Activated T-helper 2 cell treated with anti-CD3 and anti-CD28 coated beads, Interferon-gamma antibody, Interleukin-2, Interleukin-4, amounts not matched to agents 10 μg/mL and 5 μg/mL and 100 μg/mL, durations not matched to agents 14 hours and 24 hours and 36 hours (primary cell): ENCODE measurements at regions of chr10 and their contacts with region 1.

Region 1: DNA sequence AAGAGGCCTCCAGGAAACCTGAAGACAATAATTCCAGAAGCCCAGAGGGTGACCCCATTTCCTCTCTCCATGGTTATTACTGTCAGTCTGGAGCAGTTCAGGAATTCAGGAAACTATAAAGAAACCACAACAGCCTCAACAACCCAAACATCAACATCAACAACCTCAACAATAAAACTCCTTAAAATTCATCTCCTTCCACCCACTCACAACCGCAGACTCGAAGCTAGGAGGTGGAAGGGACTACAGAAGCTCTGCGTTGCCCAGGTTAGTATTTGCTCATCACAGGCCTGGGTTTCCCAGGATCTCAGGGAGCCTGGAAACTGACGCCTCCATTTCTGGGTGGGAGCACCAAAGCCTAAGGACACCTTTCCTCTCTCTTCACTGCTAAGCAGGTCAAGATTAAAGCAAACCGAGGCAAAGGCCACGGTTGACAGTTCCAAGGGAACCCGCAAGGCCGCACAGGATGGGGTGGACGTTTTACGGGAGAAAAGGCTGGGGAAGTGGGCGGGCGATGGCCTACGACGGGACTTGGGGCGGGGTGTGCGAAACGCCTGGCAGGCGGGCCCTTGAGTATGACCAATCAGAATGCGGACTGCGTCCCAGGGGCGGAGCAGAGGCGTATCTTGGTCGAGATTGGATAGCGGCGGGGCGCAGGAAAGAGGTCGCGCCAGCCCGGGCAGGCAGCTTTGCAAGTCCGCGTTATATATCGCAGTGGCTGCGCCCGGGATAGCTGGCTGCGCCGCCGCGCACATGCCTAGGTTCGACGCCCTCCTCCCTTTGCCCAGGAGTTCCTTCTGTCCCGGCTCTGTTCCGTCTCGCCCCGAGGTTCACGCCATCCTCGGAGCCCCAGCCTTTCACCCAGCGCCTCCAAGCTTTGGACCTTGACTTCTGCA is at the start of gene ELOVL3:
- DNase-seq: peak; percentile 86
- H3K4me3 Mint-ChIP-seq: peak within 1 kb of the TSS; percentile 59
- H3K27ac Mint-ChIP-seq: no peak within 1 kb of the TSS
- H3K4me1 Mint-ChIP-seq: peaks cover 23% of the 10 kb centered on the region
- H3K27me3 Mint-ChIP-seq: peaks cover 47% of the 10 kb centered on the region
- total RNA-seq, gene ELOVL3: not detected in 2 replicates

Region 2: GRCh38 chr10:101903827-101904550 is 321.9 kb before region 1 on chr10:
- intact Hi-C with region 1: no loop called
- DNase-seq: no peak
- H3K4me3 Mint-ChIP-seq: no peak overlapping the region
- H3K27ac Mint-ChIP-seq: no peak overlapping the region
- H3K4me1 Mint-ChIP-seq: peaks cover 12% of the 10 kb centered on the region
- H3K27me3 Mint-ChIP-seq: no peaks in the 10 kb centered on the region

Region 3: DNA sequence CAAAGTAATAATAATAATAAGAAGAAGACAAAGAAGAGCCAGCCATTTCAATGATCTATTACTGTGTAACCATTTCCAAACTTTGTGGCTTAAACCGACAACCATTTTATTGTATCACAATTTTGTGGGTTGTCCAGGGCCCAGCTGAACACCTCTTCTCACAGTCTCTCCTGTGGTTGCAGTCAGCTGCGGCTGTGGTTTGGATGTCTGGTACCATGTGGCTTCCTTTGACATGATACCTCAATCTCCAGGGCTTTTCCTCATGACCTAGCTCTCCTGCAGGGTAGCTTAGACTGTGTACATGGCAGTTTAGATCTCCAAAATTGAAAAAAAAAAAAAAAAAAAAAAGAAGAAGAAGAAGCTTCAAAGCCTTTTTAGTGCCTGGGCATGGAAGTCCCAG is 97.0 kb after region 1 on chr10:
- intact Hi-C with region 1: no loop called
- DNase-seq: peak; percentile 50
- H3K4me3 Mint-ChIP-seq: no peak overlapping the region
- H3K27ac Mint-ChIP-seq: no peak overlapping the region
- H3K4me1 Mint-ChIP-seq: peaks cover 18% of the 10 kb centered on the region
- H3K27me3 Mint-ChIP-seq: no peaks in the 10 kb centered on the region

Region 4: DNA sequence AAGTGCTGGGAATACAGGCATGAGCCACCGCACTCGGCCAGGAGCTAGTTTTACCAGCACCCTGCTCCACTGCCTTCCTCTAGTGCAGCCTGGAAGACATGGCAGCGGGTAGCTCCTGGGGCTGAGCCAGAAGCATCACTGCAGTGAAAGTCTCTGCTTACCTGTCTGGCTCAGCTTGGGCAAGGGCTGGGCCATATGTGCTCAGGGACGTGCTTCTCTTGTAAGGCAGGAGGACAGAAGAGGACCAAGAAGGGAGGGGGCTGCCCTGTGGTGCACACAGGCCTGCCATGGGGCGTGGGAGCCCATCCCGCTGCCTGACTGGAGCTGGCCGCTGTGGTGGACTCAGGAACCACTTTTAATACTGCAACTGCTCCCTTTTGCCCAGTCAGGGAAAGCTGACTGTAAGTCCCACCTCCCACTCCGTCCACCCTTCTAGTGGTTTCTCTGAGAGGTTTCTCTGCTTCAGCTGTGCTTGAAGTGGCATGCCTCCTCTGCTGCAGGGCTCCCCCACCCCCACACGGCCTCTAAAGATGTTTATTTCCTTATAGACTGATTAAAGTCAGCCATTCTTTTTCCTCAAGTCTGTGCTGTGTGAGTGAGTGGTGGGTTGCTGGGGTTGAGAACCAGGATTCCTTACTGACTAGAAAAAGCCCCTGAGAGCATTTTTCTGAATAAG is 250.7 kb after region 1 on chr10:
- intact Hi-C with region 1: loop called (anchors 1 kb)
- DNase-seq: no peak
- H3K4me3 Mint-ChIP-seq: no peak overlapping the region
- H3K27ac Mint-ChIP-seq: no peak overlapping the region
- H3K4me1 Mint-ChIP-seq: peaks cover 12% of the 10 kb centered on the region
- H3K27me3 Mint-ChIP-seq: no peaks in the 10 kb centered on the region